KBM-7 (cell line): ENCODE measurements at regions of chr11 and their contacts with region 1.

Region 1: DNA sequence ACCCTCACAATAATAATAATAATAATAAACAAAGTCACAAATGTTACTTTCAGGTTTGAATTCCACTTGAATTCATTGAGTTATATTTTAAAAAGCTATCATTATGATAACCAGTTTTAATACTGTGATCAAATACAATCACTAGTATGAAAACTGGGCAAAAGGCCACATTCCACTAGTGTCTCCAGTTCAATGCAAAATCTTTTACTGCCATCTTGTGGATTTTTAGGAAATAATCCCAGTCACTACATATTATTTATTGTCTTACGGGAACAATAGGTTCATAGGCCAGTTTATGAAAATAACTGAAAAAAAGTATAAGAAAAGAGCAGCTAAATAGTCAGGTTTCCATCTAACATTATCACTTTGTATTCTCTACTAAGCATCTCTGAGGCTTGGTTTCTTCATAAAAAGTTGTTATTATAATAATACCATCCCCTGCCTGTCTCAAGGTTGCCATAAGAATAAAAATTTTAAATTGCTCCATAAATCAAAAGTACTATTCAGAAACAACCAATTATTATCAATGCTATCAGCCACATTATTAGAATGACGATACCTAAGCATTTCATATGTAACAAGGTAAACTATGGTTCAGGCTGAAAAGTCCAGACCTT is 533.9 kb upstream of the CCDC90B start:
- DNase-seq: peak; percentile 41

Region 2: DNA sequence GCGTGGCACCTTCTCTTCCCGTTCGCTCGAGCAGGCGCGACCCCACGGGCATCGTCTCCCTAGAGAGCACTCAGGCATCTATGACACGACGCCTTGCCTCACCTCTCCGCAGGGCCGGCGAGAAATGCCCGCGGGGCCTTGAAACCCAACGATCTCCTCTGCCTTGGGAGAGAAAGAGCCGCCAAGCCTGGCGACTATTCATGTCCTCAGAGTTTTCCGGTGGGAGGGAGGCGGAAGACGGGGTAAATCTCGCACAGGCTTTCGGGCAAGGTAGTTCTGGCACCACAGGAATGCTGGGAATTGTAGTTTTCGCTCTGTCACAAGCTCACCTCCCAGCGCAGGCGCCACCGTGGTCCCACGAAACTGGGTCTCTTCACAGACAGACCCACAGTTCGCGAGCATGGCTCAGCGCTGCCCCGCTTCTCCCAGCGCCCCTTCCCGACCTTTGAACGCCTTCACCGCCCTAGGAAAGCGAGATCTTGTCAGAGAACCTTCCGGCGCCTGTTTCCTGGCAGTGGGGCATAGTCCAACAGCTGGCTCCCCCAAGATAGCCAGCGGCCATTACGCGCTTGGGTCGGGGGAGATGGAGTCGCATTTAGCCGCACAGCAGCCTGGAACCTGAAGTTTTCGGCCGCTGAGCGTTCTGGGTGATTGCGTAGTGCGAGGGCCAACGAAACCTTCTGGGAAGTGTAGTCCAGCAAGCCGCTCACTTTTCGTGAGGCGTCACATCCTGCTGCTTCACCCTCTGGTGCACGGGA is 534.1 kb before region 1 on chr11 and contains the start of gene CCDC90B:
- in situ Hi-C with region 1: loop called (anchors 25 kb)
- DNase-seq: peak; percentile 98

Region 3: DNA sequence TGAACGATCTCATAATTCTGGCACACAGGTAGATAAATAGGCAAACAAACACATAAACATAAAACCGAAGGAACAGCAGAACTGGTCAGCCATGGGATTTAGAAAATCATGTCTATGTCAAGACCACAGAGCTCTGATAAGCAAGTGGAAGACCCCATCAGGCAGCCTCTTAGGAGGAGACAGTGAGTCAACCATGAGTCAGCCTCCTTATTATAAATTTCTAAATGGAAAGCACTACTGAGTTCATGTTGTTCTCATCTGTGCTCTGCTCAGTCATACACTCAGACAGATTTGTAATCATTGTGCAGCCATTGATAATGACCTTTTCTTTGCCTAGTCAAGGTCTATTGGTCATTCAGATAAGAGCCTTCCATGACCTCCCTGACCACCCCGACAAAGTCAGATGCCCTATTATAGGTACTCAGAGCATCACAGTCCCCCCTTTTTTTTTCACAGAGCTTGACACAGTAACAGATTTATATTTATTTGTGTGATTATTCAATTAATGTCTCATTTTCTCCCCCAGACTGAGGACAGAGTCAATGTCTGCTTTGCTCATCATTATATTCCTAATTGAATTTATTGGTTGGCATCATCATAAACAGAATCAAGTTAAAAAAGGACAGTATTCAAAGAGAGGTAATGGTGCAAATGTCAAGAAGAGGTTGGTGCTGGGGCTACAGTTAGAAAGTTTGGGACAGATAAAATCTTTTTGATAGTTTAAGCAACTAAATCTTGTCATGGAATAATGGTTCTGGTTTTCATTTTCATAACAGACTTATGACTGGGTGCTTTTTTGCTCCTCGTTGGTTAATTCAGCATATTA is 45.8 kb after region 1 on chr11:
- in situ Hi-C with region 1: no loop called
- DNase-seq: no peak